Activated CD4-positive, alpha-beta T cell treated with anti-CD3 and anti-CD28 coated beads for 36 hours (primary cell): ENCODE measurements at regions of chr2 and their contacts with region 1.

Region 1: DNA sequence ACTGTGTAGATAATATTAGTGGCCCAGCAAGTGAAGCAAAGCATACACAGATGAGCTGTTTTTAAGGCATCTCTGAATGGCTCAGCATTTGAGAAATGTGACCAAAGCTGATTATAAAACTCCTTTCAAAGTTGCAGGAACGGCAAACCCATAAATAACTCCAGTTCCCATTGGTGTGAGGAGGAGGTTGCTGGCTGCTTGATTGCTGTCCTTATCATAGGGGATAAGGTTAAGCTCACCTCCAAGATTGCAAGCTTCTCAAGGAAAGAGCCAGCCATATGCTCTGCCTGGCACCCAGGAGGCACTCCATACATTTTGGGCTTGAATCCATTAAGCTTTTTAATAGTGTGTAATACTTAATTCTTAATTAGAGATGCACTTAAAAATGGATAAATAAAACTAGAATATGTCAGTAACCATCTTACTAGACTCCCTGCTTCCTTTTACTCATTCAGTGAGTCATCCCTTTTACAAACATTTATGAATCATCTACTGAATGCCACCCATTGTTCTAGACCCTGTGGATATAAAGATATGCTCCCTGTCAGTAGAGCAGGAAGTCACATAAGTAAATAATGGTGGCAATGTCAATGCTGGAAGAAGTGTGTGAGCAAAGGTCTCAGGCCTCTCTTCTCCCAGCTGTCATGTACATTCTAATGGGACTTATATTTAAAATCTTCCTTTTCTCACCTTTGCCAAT is 99.3 kb downstream of the SPATS2L start:
- DNase-seq: no peak
- ATAC-seq: peak; percentile 99
- H3K4me3 Mint-ChIP-seq: no peak overlapping the region
- H3K27ac Mint-ChIP-seq: peak overlapping the region; percentile 45
- H3K4me1 Mint-ChIP-seq: peaks cover 29% of the 10 kb centered on the region
- H3K27me3 Mint-ChIP-seq: no peaks in the 10 kb centered on the region

Region 2: GRCh38 chr2:200189964-200190363 is 215.8 kb before region 1 on chr2:
- CTCF ChIA-PET with region 1: no interaction called
- POLR2A ChIA-PET with region 1: no interaction called
- intact Hi-C with region 1: no loop called
- DNase-seq: no peak
- ATAC-seq: no peak
- H3K4me3 Mint-ChIP-seq: no peak overlapping the region
- H3K27ac Mint-ChIP-seq: no peak overlapping the region
- H3K4me1 Mint-ChIP-seq: no peaks in the 10 kb centered on the region
- H3K27me3 Mint-ChIP-seq: peaks cover 16% of the 10 kb centered on the region

Region 3: GRCh38 chr2:200373973-200374416 is 31.8 kb before region 1 on chr2:
- CTCF ChIA-PET with region 1: no interaction called
- POLR2A ChIA-PET with region 1: no interaction called
- intact Hi-C with region 1: loop called (anchors 1 kb)
- DNase-seq: peak; percentile 57
- ATAC-seq: peak; percentile 92
- H3K4me3 Mint-ChIP-seq: peak overlapping the region; percentile 67
- H3K27ac Mint-ChIP-seq: peak overlapping the region; percentile 79
- H3K4me1 Mint-ChIP-seq: peaks cover 46% of the 10 kb centered on the region
- H3K27me3 Mint-ChIP-seq: no peaks in the 10 kb centered on the region